SK-N-SH (cell line): ENCODE measurements at regions of chr16 and their contacts with region 1.

Region 1: GRCh38 chr16:73878611-73879010 is 418.0 kb upstream of the PSMD7 start:
- DNase-seq: peak; percentile 46
- H3K4me3 ChIP-seq: no peak overlapping the region; a peak in 1 of 4 replicates
- H3K27ac ChIP-seq: no peak overlapping the region
- H3K4me1 ChIP-seq: peaks cover 0 to 3% of the 10 kb centered on the region in 2 experiments; a peak in 2 of 4 replicates
- H3K27me3 ChIP-seq: no peaks in the 10 kb centered on the region
- CTCF ChIP-seq: peak; percentile 66
- EP300 ChIP-seq: no peak
- RAD21 ChIP-seq: peak; percentile 94

Region 2: GRCh38 chr16:73179705-73180677 is 698.6 kb before region 1 on chr16:
- CTCF ChIA-PET with region 1: interaction called, 14 read pairs
- POLR2A ChIA-PET with region 1: no interaction called
- DNase-seq: no peak
- H3K4me3 ChIP-seq: no peak overlapping the region
- H3K27ac ChIP-seq: no peak overlapping the region
- H3K4me1 ChIP-seq: peaks cover 0 to 15% of the 10 kb centered on the region in 2 experiments; a peak in 2 of 4 replicates
- H3K27me3 ChIP-seq: no peaks in the 10 kb centered on the region
- CTCF ChIP-seq: no peak
- EP300 ChIP-seq: no peak
- RAD21 ChIP-seq: no peak

Region 3: DNA sequence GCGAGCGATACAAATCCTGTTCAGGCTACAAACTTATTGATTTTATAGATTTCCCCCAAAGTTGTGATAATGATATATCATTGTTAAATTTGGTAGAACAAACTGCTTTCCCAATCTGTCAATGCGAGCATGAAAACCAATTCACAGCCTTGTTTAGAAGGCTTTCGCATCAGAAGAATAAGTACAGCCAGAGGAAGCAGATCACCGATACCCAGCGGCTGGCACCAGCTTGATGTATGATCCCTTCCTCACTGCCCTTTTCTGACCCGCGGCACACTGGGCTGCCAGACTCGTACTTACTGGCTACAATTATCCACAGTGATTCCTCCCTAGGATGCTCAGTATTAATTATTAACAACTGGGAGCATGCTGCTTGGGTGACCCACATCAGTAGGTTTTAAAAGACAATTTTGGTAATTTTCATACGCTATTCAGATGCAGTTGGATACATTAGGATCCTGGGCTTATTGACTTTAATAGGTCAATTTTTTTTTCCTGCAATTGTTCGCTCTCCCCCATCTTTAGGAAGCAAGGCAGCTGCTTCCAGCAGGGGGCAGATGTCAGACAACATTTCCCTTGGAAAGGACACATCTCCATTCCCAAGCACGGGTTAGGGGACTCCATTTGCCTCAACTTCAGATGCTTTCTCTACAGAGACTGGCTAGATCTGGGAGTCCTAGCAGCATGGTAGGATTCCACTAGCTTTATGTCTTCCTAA is 164.7 kb before region 1 on chr16:
- CTCF ChIA-PET with region 1: interaction called, 12 read pairs
- POLR2A ChIA-PET with region 1: no interaction called
- DNase-seq: peak; percentile 37
- H3K4me3 ChIP-seq: no peak overlapping the region
- H3K27ac ChIP-seq: no peak overlapping the region
- H3K4me1 ChIP-seq: no peaks in the 10 kb centered on the region; a peak in 1 of 4 replicates
- H3K27me3 ChIP-seq: no peaks in the 10 kb centered on the region
- CTCF ChIP-seq: peak; percentile 41
- EP300 ChIP-seq: no peak
- RAD21 ChIP-seq: peak; percentile 56

Region 4: DNA sequence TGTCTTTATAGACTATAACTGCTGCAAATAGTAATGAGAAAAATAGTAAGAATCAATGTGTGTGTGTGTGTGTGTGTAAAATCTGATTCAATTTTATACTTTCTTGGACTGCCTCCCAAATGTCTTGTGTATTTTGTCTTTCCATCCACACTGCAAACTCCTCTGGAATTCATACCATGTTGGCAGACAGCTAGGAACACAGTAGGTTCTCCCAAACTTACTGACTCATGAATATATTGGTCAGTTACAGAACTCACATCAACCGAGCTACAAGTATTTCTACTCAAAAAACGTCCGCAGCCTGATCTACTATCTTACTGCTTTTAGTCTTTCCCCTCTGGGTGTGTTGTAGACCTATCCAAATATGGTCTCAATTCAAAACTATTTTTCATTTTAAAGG is 124.7 kb before region 1 on chr16:
- CTCF ChIA-PET with region 1: no interaction called
- POLR2A ChIA-PET with region 1: no interaction called
- DNase-seq: no peak
- H3K4me3 ChIP-seq: no peak overlapping the region
- H3K27ac ChIP-seq: no peak overlapping the region
- H3K4me1 ChIP-seq: no peaks in the 10 kb centered on the region; a peak in 1 of 4 replicates
- H3K27me3 ChIP-seq: no peaks in the 10 kb centered on the region
- CTCF ChIP-seq: no peak
- EP300 ChIP-seq: no peak
- RAD21 ChIP-seq: no peak

Region 5: DNA sequence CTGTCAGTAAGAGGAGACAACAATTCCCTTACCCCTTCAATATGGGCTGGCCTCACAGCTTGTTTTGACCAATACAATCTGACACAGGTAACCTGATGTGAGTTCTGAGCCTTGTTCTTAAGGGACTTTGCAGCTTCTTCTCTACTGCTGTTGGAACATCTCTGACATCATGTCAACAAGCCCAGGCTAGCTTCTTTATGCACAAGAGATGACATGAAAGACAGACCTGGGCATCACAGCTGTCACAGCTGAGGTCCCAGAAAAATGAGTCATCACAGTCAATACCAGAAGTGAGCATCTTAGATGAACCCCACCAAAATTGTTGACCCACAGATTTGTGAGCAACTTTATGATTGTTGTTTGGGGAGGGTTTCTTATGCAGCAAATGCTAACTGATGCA is 13.7 kb before region 1 on chr16:
- CTCF ChIA-PET with region 1: interaction called, 20 read pairs
- POLR2A ChIA-PET with region 1: no interaction called
- DNase-seq: no peak
- H3K4me3 ChIP-seq: no peak overlapping the region
- H3K27ac ChIP-seq: no peak overlapping the region
- H3K4me1 ChIP-seq: no peaks in the 10 kb centered on the region
- H3K27me3 ChIP-seq: no peaks in the 10 kb centered on the region
- CTCF ChIP-seq: no peak
- EP300 ChIP-seq: no peak
- RAD21 ChIP-seq: no peak

Region 6: DNA sequence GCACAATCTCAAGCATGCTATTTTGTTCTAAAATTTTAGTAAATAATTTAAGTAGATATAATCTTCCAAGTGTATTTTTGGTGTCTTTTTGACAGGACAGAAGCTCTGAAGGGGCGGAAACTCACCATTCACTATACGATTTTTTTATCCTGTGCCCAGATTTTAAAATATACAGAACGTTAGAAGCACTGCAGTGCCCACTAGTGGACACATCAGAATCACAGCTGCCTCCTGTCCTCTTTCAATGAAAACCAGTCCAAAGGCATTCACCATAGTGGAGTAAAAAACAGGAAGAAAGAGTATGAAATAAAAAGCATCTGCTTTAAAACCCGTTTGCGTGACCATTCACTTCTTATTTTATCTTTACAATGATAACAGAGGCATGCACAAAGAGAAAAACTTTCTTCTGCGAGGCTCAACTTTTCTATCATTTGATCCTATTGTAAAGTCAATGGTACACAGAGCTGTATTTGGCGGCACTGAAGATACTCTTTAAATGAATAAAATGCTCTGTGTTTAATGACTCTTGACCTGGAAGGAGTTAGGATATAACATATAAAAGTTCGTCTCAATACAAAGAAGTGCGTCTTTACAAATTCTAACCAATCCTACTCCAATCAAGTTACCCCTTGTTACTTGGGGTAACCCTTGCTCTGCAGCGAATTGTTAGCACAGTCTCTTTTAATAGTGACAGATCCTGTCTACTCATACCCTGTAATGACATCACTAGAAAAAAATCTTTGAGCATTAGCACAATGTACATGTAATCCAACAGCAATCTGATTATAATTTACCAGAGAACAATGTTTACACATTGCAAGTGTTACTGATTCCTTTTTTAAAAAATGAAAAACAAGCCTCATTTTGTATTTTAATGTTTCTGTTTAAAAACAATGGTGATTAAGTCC is 78.2 kb after region 1 on chr16:
- CTCF ChIA-PET with region 1: interaction called, 19 read pairs
- POLR2A ChIA-PET with region 1: no interaction called
- DNase-seq: peak; percentile 65
- H3K4me3 ChIP-seq: no peak overlapping the region
- H3K27ac ChIP-seq: no peak overlapping the region
- H3K4me1 ChIP-seq: no peaks in the 10 kb centered on the region; a peak in 2 of 4 replicates
- H3K27me3 ChIP-seq: no peaks in the 10 kb centered on the region
- CTCF ChIP-seq: peak; percentile 95
- EP300 ChIP-seq: no peak
- RAD21 ChIP-seq: peak; percentile 91